ENCODE measurements at regions of chr2 and their contacts with region 1.

Region 1: DNA sequence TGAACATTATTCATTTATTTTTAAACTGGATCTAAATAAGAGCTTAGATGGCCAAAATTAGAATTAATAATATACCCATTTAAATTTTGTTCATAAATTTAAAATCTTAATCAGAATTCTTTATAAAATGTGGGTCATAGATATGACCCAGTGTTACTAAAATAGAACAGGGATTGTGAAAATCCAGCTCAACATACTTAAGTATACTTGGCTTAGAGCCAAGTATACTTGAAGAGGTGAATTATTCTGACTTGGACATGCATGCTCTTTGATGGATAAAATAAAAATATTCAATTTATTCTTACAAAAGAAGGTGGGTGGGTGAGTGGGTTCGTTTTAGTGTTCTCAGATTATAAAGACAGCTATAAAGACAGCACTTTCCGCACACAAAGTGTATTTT is 70.7 kb downstream of the SPOPL start:
- DNase-seq: no peak
- ATAC-seq: no peak
- H3K4me3 Mint-ChIP-seq: no peak overlapping the region
- H3K27ac Mint-ChIP-seq: no peak overlapping the region
- H3K4me1 Mint-ChIP-seq: no peaks in the 10 kb centered on the region
- H3K27me3 Mint-ChIP-seq: no peaks in the 10 kb centered on the region

Region 2: GRCh38 chr2:138516030-138516704 is 56.2 kb before region 1 on chr2:
- CTCF ChIA-PET with region 1: no interaction called
- POLR2A ChIA-PET with region 1: no interaction called
- intact Hi-C with region 1: no loop called
- DNase-seq: no peak
- ATAC-seq: peak; percentile 33
- H3K4me3 Mint-ChIP-seq: no peak overlapping the region
- H3K27ac Mint-ChIP-seq: no peak overlapping the region
- H3K4me1 Mint-ChIP-seq: peaks cover 40% of the 10 kb centered on the region
- H3K27me3 Mint-ChIP-seq: peaks cover 4% of the 10 kb centered on the region

Region 3: GRCh38 chr2:138559641-138560040 is 12.7 kb before region 1 on chr2:
- CTCF ChIA-PET with region 1: no interaction called
- POLR2A ChIA-PET with region 1: no interaction called
- intact Hi-C with region 1: loop called in 1 of 2 experiments (anchors 1 kb)
- DNase-seq: no peak
- ATAC-seq: no peak
- H3K4me3 Mint-ChIP-seq: no peak overlapping the region
- H3K27ac Mint-ChIP-seq: no peak overlapping the region
- H3K4me1 Mint-ChIP-seq: no peaks in the 10 kb centered on the region
- H3K27me3 Mint-ChIP-seq: no peaks in the 10 kb centered on the region